WTC11 (cell line): ENCODE measurements at regions of chr5 and their contacts with region 1.

Region 1: DNA sequence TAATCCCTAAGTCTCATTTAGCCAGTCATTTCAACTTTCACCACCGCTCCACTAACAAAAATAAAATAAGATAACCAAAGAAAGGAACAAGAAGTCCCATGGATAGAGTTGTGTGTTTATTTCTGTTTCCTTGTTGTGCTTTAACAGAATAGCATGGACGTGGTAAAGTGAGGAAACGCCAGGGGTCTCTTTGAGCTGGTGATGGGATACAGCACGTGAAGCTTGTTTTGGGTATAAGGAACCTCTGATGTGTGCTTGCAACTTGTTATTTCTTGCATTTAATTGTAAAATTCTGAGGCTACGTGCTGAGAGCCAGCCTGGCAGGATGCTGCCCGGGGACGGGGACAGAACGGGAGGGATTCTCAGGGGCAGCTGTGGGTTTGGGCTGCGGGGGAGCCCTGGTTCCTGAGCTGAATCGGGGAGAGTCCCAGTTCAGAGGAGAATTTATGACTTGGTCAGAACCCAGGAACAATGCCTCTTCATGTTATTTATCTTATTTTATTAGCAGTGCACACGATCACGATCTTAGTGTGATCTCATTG is 63.4 kb downstream of the ANKRD33B start:
- DNase-seq: peak; percentile 34
- ATAC-seq: peak; percentile 20
- H3K4me3 Mint-ChIP-seq: peak overlapping the region; percentile 76
- H3K27ac Mint-ChIP-seq: peak overlapping the region; percentile 89
- H3K4me1 Mint-ChIP-seq: peaks cover 34% of the 10 kb centered on the region
- H3K27me3 Mint-ChIP-seq: no peaks in the 10 kb centered on the region; the same call in none of the 2 replicates
- CTCF ChIP-seq: no peak

Region 2: DNA sequence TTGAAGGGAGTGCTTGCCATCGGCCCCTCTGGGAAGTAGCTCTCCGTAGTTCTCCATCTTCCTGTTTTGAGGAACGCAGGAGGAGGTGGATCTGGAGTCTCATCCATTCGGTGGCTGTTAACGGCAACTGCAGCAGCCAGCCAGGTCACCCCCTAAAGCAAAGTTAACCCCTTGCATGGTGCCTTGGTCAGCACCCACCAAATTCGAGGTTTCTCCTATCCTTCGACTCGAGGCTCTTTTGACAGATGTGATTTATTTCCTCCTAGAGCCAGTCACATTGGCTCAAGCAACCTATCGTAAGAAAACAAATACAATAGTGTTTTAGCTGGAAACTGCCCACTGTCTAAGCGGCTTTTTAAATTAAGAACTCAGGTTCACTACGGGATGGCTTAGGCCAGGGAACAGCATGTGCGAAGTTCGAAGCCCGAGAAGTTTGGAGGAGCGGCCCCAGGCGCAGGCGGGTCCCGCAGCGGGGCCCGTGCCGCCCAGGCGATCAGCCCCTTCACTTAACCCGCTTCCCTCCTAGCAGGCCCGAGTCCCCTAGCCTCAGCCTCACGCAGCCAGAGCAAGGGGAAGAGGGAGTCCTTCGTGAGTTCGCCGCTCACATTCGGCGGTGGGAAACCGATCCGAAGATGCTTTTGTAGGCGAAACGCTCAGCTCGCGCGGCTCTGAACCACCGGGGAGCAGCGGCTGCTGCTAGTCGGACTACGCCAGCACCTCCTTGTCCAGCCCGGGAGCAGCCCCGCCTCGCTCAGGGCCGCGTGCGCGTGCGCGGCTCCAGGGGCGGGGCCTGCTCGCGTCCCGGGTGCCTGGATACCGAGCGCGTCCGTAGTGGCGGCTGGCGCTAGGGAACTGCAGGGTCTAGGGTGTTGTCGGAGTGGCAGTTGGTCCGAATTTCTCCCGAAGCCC is 185.9 kb before region 1 on chr5 and contains the start of gene ROPN1L:
- CTCF ChIA-PET with region 1: interaction called, 26 read pairs
- POLR2A ChIA-PET with region 1: no interaction called
- DNase-seq: peak; percentile 88
- ATAC-seq: peak; percentile 94
- H3K4me3 Mint-ChIP-seq: peak within 1 kb of the TSS; percentile 81
- H3K27ac Mint-ChIP-seq: no peak within 1 kb of the TSS
- H3K4me1 Mint-ChIP-seq: peaks cover 9% of the 10 kb centered on the region
- H3K27me3 Mint-ChIP-seq: peaks cover 35% of the 10 kb centered on the region
- CTCF ChIP-seq: no peak
- total RNA-seq, gene ROPN1L: 0.27 TPM in 1 of 3 replicates, not detected in the others

Region 3: DNA sequence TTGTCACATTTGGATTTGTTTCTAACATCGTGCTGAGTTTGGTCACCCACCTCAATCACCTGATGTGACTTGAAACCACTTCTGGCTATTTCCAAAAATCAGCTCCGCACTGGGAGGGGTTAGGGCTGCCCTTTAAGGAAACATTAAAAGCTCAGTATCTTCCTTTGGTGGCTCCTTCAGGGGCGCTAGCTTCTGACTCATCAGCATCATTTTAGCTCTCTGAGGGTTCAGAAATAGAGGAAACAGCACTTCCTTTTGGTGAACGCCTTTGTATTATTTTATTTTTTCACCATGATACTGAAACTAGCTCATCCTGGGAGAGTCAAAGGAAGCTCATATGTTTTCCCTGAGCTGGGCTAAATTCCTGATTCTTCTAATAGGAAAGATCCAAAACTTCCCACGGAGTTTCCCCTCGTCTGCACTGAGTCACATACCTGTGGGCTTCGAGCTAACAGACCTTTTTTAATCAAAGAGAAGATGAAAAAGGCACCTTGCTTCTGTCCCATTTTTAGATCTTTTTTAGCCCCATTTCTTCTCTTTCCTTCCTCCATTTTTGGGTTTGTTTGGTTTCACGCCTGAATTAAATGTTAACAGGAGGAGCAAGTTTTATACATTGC is 137.3 kb before region 1 on chr5:
- CTCF ChIA-PET with region 1: interaction called, 10 read pairs
- POLR2A ChIA-PET with region 1: no interaction called
- DNase-seq: no peak
- ATAC-seq: no peak
- H3K4me3 Mint-ChIP-seq: no peak overlapping the region
- H3K27ac Mint-ChIP-seq: no peak overlapping the region
- H3K4me1 Mint-ChIP-seq: peaks cover 15% of the 10 kb centered on the region
- H3K27me3 Mint-ChIP-seq: peaks cover 4% of the 10 kb centered on the region; the same call in 1 of the 2 replicates
- CTCF ChIP-seq: no peak

Region 4: GRCh38 chr5:10559871-10560270 is 67.4 kb before region 1 on chr5:
- CTCF ChIA-PET with region 1: interaction called, 12 read pairs
- POLR2A ChIA-PET with region 1: interaction called, 5 read pairs
- DNase-seq: no peak
- ATAC-seq: no peak
- H3K4me3 Mint-ChIP-seq: no peak overlapping the region
- H3K27ac Mint-ChIP-seq: no peak overlapping the region
- H3K4me1 Mint-ChIP-seq: peaks cover 9% of the 10 kb centered on the region; the same call in 1 of the 2 replicates
- H3K27me3 Mint-ChIP-seq: peaks cover 54% of the 10 kb centered on the region
- CTCF ChIP-seq: no peak

Region 5: GRCh38 chr5:10607666-10608073 is 19.6 kb before region 1 on chr5:
- CTCF ChIA-PET with region 1: interaction called, 32 read pairs
- POLR2A ChIA-PET with region 1: no interaction called
- DNase-seq: no peak
- ATAC-seq: peak; percentile 75
- H3K4me3 Mint-ChIP-seq: no peak overlapping the region
- H3K27ac Mint-ChIP-seq: peak overlapping the region; percentile 89; the same call in 1 of the 2 replicates
- H3K4me1 Mint-ChIP-seq: peaks cover 35% of the 10 kb centered on the region
- H3K27me3 Mint-ChIP-seq: no peaks in the 10 kb centered on the region
- CTCF ChIP-seq: no peak

Region 6: DNA sequence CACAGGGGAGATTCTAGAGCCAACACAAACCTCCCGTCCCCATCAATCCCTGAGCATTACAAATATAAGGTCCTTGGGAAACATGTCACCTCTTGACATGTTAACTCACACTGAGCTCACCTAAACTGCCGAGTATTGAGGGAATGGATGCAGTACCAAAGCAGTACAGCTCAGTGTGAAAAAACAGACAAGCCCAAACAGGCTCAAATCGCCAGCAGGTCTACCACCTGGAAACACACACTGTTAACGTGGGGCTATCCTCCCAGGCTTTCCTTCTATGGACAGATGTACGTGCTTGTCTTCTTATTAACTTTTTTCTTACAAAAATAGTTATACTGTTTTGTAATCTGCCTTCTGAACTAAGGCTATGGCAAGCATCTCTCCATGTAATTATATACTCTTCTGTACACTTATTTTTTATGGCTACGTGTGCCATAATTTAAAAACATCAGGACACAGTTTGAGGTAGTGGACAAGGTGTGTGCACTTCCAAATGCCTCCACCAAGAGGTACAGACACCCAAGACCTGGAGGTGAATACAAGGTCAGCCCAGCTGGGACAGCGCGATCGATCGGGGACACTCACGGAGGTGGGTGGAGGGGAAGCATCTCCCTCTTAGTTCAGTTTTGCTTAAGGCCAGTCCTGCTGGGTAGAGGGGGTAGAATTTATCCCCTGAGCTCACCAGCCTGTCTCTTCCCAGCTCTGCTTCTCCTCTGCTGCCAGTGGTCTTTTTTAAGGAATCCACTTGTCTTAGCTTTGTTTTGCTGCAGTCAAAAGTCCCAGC is 57.3 kb after region 1 on chr5:
- CTCF ChIA-PET with region 1: interaction called, 25 read pairs
- POLR2A ChIA-PET with region 1: no interaction called
- DNase-seq: no peak
- ATAC-seq: peak; percentile 17; the same call in 1 of the 2 replicates
- H3K4me3 Mint-ChIP-seq: no peak overlapping the region
- H3K27ac Mint-ChIP-seq: peak overlapping the region; percentile 63; the same call in 1 of the 2 replicates
- H3K4me1 Mint-ChIP-seq: peaks cover 25% of the 10 kb centered on the region
- H3K27me3 Mint-ChIP-seq: no peaks in the 10 kb centered on the region
- CTCF ChIP-seq: no peak